CD4-positive, alpha-beta T cell (primary cell): ENCODE measurements at regions of chr22 and their contacts with region 1.

Region 1: GRCh38 chr22:30634471-30635233 is 929 bp upstream of the SLC35E4 start:
- DNase-seq: peak; percentile 80 to 95 (median 89)
- ATAC-seq: peak; percentile 68
- H3K4me3 ChIP-seq: peak overlapping the region; percentile 68
- H3K4me3 Mint-ChIP-seq: peak overlapping the region; percentile 89
- H3K27ac ChIP-seq: peak overlapping the region; percentile 73 to 76
- H3K27ac Mint-ChIP-seq: peak overlapping the region; percentile 94
- H3K4me1 ChIP-seq: peaks cover 36% of the 10 kb centered on the region
- H3K4me1 Mint-ChIP-seq: peaks cover 28% of the 10 kb centered on the region
- H3K27me3 ChIP-seq: no peaks in the 10 kb centered on the region
- H3K27me3 Mint-ChIP-seq: no peaks in the 10 kb centered on the region
- CTCF ChIP-seq: peak; percentile 91

Region 2: GRCh38 chr22:30373331-30374325 is 261.0 kb before region 1 on chr22:
- CTCF ChIA-PET with region 1: no interaction called
- POLR2A ChIA-PET with region 1: no interaction called
- intact Hi-C with region 1: no loop called
- DNase-seq: no peak
- ATAC-seq: no peak
- H3K4me3 ChIP-seq: no peak overlapping the region
- H3K4me3 Mint-ChIP-seq: no peak overlapping the region
- H3K27ac ChIP-seq: no peak overlapping the region
- H3K27ac Mint-ChIP-seq: no peak overlapping the region
- H3K4me1 ChIP-seq: no peaks in the 10 kb centered on the region
- H3K4me1 Mint-ChIP-seq: no peaks in the 10 kb centered on the region
- H3K27me3 ChIP-seq: no peaks in the 10 kb centered on the region
- H3K27me3 Mint-ChIP-seq: no peaks in the 10 kb centered on the region
- CTCF ChIP-seq: no peak

Region 3: DNA sequence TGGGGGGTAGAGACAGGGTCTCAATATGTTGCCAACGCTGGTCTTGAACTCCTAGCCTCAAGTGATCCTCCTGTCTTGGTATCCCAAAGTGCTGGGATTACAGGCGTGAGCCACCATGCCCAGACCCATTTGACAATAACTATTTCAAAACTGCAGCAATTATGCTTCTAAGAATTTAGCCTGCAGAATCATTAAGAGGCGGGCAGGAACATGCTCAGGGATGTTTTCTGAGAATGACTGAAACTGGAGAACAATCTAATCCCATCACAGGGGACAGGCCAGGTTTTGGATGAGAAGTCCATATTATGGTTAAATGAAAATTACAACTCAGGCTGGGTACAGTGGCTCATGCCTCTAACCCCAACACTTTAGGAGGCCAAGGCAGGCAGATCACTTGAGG is 57.0 kb before region 1 on chr22:
- CTCF ChIA-PET with region 1: no interaction called
- POLR2A ChIA-PET with region 1: no interaction called
- intact Hi-C with region 1: no loop called
- DNase-seq: no peak
- ATAC-seq: no peak
- H3K4me3 ChIP-seq: no peak overlapping the region
- H3K4me3 Mint-ChIP-seq: no peak overlapping the region
- H3K27ac ChIP-seq: no peak overlapping the region
- H3K27ac Mint-ChIP-seq: no peak overlapping the region
- H3K4me1 ChIP-seq: peaks cover 10% of the 10 kb centered on the region
- H3K4me1 Mint-ChIP-seq: no peaks in the 10 kb centered on the region
- H3K27me3 ChIP-seq: peaks cover 0 to 2% of the 10 kb centered on the region in 2 experiments
- H3K27me3 Mint-ChIP-seq: no peaks in the 10 kb centered on the region
- CTCF ChIP-seq: no peak

Region 4: GRCh38 chr22:30591588-30592359 is 42.9 kb before region 1 on chr22 and contains the start of gene PES1:
- CTCF ChIA-PET with region 1: interaction called, 9 read pairs
- POLR2A ChIA-PET with region 1: interaction called, 9 read pairs
- intact Hi-C with region 1: loop called in 1 of 2 experiments (anchors 1 kb)
- DNase-seq: peak; percentile 91 to 99 (median 94)
- ATAC-seq: peak; percentile 96
- H3K4me3 ChIP-seq: peak within 1 kb of the TSS; percentile 96
- H3K4me3 Mint-ChIP-seq: no peak within 1 kb of the TSS
- H3K27ac ChIP-seq: peak within 1 kb of the TSS; percentile 85 to 97
- H3K27ac Mint-ChIP-seq: no peak within 1 kb of the TSS
- H3K4me1 ChIP-seq: peaks cover 16% of the 10 kb centered on the region
- H3K4me1 Mint-ChIP-seq: no peaks in the 10 kb centered on the region
- H3K27me3 ChIP-seq: no peaks in the 10 kb centered on the region
- H3K27me3 Mint-ChIP-seq: no peaks in the 10 kb centered on the region
- CTCF ChIP-seq: no peak
- total RNA-seq, gene PES1: 28.4 to 30.5 TPM

Region 5: DNA sequence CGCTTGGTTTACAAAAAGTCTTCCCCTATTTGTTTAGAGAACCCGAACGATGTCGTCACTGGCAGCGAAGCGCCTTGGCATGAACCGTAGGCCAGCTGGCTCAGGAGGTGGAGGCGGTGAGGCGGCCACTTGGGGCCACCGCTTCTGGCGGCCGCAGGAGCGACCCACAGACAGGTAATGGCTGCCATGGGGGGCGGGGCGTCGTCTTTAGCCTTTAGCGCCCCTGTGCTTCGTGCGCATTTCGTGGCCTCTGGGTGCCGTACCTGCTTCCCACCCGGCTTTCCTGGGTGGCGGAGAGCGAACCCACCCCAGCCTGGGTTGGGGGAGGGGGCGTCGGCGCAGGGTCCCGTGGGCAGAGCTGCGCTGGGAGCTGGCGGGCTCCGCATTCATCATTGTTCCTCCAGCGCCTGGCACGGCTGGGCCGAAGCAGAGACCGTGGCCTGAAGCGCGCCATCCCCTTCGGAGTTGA is 59.6 kb after region 1 on chr22:
- CTCF ChIA-PET with region 1: no interaction called
- POLR2A ChIA-PET with region 1: interaction called, 6 read pairs
- intact Hi-C with region 1: loop called in 1 of 2 experiments (anchors 10 kb)
- DNase-seq: peak; percentile 23 to 75 (median 50)
- ATAC-seq: peak; percentile 73
- H3K4me3 ChIP-seq: peak overlapping the region; percentile 67
- H3K4me3 Mint-ChIP-seq: peak overlapping the region; percentile 93
- H3K27ac ChIP-seq: no peak overlapping the region
- H3K27ac Mint-ChIP-seq: peak overlapping the region; percentile 50
- H3K4me1 ChIP-seq: peaks cover 17% of the 10 kb centered on the region
- H3K4me1 Mint-ChIP-seq: peaks cover 14% of the 10 kb centered on the region
- H3K27me3 ChIP-seq: no peaks in the 10 kb centered on the region
- H3K27me3 Mint-ChIP-seq: peaks cover 24% of the 10 kb centered on the region
- CTCF ChIP-seq: no peak

Region 6: GRCh38 chr22:30763815-30764686 is 129.4 kb after region 1 on chr22:
- CTCF ChIA-PET with region 1: no interaction called
- POLR2A ChIA-PET with region 1: no interaction called
- intact Hi-C with region 1: loop called in 1 of 2 experiments (anchors 2 kb)
- DNase-seq: peak; percentile 5 to 80 (median 37)
- ATAC-seq: peak; percentile 71
- H3K4me3 ChIP-seq: no peak overlapping the region
- H3K4me3 Mint-ChIP-seq: no peak overlapping the region
- H3K27ac ChIP-seq: no peak overlapping the region
- H3K27ac Mint-ChIP-seq: no peak overlapping the region
- H3K4me1 ChIP-seq: peaks cover 4% of the 10 kb centered on the region
- H3K4me1 Mint-ChIP-seq: no peaks in the 10 kb centered on the region
- H3K27me3 ChIP-seq: no peaks in the 10 kb centered on the region
- H3K27me3 Mint-ChIP-seq: no peaks in the 10 kb centered on the region
- CTCF ChIP-seq: peak; percentile 55

Region 7: DNA sequence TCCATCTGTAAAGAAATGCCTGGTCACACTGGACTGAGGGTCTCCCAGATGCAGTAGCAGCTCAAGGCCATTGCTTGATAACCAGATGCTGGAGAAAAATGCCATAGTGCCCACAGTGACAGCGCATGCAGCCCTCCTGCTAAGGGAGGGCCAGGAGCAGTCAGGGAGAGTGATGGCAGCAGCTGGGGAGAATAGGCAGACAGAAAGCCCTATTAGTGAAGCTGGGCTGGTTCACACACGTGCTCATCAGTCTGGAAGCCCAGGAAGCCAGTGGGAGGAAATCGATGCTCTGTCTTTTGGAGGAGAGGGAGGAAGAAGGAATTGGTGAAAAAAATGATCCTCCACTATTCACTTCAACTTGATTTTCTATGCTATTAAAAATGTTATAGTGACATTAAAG is 142.9 kb after region 1 on chr22:
- CTCF ChIA-PET with region 1: no interaction called
- POLR2A ChIA-PET with region 1: no interaction called
- intact Hi-C with region 1: no loop called
- DNase-seq: no peak
- ATAC-seq: no peak
- H3K4me3 ChIP-seq: no peak overlapping the region
- H3K4me3 Mint-ChIP-seq: no peak overlapping the region
- H3K27ac ChIP-seq: no peak overlapping the region
- H3K27ac Mint-ChIP-seq: no peak overlapping the region
- H3K4me1 ChIP-seq: no peaks in the 10 kb centered on the region
- H3K4me1 Mint-ChIP-seq: no peaks in the 10 kb centered on the region
- H3K27me3 ChIP-seq: no peaks in the 10 kb centered on the region
- H3K27me3 Mint-ChIP-seq: no peaks in the 10 kb centered on the region
- CTCF ChIP-seq: no peak

Region 8: DNA sequence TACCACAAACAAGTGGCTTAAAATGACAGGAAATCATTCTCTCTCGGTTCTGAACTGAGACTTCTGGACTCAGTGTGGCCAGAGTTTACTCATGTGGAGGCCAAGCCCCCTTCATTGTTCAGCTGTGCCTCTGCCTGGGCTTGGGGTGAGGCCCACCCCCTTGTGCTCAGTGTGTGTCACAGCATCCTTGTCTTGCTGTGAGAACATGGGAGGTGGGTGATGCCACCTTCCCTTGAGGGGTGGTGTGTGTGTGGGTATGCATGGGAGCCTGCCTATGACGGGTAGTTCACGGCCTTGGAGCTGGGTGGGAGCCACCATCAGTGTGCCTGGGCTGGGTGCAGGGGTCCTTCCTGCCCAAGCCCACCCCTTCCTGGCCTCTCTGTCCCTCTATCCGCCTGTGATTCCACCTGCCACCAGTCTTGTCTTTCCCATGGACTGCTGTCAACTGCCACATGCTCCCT is 232.2 kb after region 1 on chr22:
- CTCF ChIA-PET with region 1: no interaction called
- POLR2A ChIA-PET with region 1: no interaction called
- intact Hi-C with region 1: no loop called
- DNase-seq: peak in 1 of 14 experiments; percentile 7
- ATAC-seq: no peak
- H3K4me3 ChIP-seq: no peak overlapping the region
- H3K4me3 Mint-ChIP-seq: no peak overlapping the region
- H3K27ac ChIP-seq: no peak overlapping the region
- H3K27ac Mint-ChIP-seq: no peak overlapping the region
- H3K4me1 ChIP-seq: no peaks in the 10 kb centered on the region
- H3K4me1 Mint-ChIP-seq: no peaks in the 10 kb centered on the region
- H3K27me3 ChIP-seq: no peaks in the 10 kb centered on the region
- H3K27me3 Mint-ChIP-seq: no peaks in the 10 kb centered on the region
- CTCF ChIP-seq: no peak

Region 9: GRCh38 chr22:31089160-31090100 is 454.8 kb after region 1 on chr22:
- CTCF ChIA-PET with region 1: no interaction called
- POLR2A ChIA-PET with region 1: interaction called, 6 read pairs
- intact Hi-C with region 1: loop called (anchors 1 kb)
- DNase-seq: peak in 11 of 14 experiments; percentile 19 to 68 (median 35)
- ATAC-seq: no peak
- H3K4me3 ChIP-seq: no peak overlapping the region
- H3K4me3 Mint-ChIP-seq: no peak overlapping the region
- H3K27ac ChIP-seq: no peak overlapping the region
- H3K27ac Mint-ChIP-seq: no peak overlapping the region
- H3K4me1 ChIP-seq: peaks cover 14% of the 10 kb centered on the region
- H3K4me1 Mint-ChIP-seq: peaks cover under 1% of the 10 kb centered on the region
- H3K27me3 ChIP-seq: no peaks in the 10 kb centered on the region
- H3K27me3 Mint-ChIP-seq: no peaks in the 10 kb centered on the region
- CTCF ChIP-seq: peak; percentile 68

Region 10: GRCh38 chr22:31230871-31231621 is 596.4 kb after region 1 on chr22:
- CTCF ChIA-PET with region 1: no interaction called
- POLR2A ChIA-PET with region 1: no interaction called
- intact Hi-C with region 1: loop called in 1 of 2 experiments (anchors 5 kb)
- DNase-seq: peak; percentile 32 to 85 (median 54)
- ATAC-seq: peak; percentile 92
- H3K4me3 ChIP-seq: no peak overlapping the region
- H3K4me3 Mint-ChIP-seq: peak overlapping the region; percentile 49
- H3K27ac ChIP-seq: peak overlapping the region in 1 of 2 donors; percentile 70
- H3K27ac Mint-ChIP-seq: peak overlapping the region; percentile 90
- H3K4me1 ChIP-seq: peaks cover 28% of the 10 kb centered on the region
- H3K4me1 Mint-ChIP-seq: peaks cover 57% of the 10 kb centered on the region
- H3K27me3 ChIP-seq: no peaks in the 10 kb centered on the region
- H3K27me3 Mint-ChIP-seq: no peaks in the 10 kb centered on the region
- CTCF ChIP-seq: peak; percentile 72